Activated T-helper 2 cell treated with anti-CD3 and anti-CD28 coated beads, Interferon-gamma antibody, Interleukin-2, Interleukin-4, amounts not matched to agents 10 μg/mL and 5 μg/mL and 100 μg/mL, durations not matched to agents 14 hours and 24 hours and 36 hours (primary cell): ENCODE measurements at regions of chr17 and their contacts with region 1.

Region 1: GRCh38 chr17:67717624-67718329 is at the start of gene NOL11:
- DNase-seq: peak; percentile 99
- H3K4me3 Mint-ChIP-seq: peak within 1 kb of the TSS; percentile 100
- H3K27ac Mint-ChIP-seq: peak within 1 kb of the TSS; percentile 100
- H3K4me1 Mint-ChIP-seq: peaks cover 13% of the 10 kb centered on the region
- H3K27me3 Mint-ChIP-seq: no peaks in the 10 kb centered on the region
- total RNA-seq, gene NOL11: 81.5 and 96.2 TPM in 2 replicates

Region 2: GRCh38 chr17:67245073-67245755 is 472.6 kb before region 1 on chr17 and contains the start of gene HELZ:
- intact Hi-C with region 1: loop called (anchors 1 kb)
- DNase-seq: peak; percentile 72
- H3K4me3 Mint-ChIP-seq: peak within 1 kb of the TSS; percentile 86
- H3K27ac Mint-ChIP-seq: peak within 1 kb of the TSS; percentile 75
- H3K4me1 Mint-ChIP-seq: peaks cover 40% of the 10 kb centered on the region
- H3K27me3 Mint-ChIP-seq: peaks cover 3% of the 10 kb centered on the region
- total RNA-seq, gene HELZ: 67.1 and 71.7 TPM in 2 replicates

Region 3: DNA sequence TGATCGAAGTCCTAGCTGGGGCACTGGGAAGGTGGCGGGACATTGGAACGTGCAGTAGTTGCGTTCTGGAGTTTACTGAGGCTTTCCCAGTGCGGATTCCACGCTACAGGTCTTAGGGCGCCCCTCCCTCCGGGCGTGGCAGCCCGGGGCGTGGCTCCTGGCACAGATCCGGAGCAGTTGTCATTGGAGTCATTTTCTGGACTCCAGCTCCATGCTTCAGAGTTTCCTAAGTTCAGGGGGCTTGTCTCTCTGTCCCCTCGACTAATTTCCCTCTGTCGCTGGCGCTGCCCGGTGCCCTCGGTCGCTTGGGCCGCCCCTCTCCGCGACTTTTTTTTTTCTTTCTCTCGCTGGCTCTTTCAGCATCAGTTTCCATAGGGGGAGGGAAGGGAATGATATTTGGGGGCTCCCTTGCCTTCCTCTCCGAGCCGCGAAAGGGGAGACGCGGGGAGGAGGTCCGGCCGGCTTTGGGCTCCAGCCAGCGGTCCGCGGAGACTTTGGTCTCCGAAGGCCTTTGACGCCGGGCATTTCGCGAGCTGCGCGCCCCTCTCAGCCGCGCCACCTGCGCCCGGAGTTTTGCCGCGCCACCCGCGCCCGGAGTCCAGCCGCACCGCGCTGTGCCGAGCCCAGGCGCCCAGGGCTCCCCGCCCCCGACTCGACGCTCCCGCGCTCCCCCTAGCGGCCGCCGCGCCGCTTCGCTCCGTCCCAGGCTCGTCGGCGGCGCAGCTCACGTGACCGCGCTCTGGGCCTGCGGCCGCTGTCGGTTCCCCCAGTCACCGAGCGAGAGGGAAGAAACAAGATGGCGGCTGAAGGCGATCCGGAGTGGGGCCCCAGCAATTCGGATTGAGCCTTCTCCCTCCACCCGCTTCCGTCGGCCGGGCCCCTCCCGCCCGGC is 107.2 kb after region 1 on chr17 and contains the start of gene BPTF:
- intact Hi-C with region 1: loop called (anchors 1 kb)
- DNase-seq: peak; percentile 89
- H3K4me3 Mint-ChIP-seq: peak within 1 kb of the TSS; percentile 98
- H3K27ac Mint-ChIP-seq: peak within 1 kb of the TSS; percentile 99
- H3K4me1 Mint-ChIP-seq: peaks cover 17% of the 10 kb centered on the region
- H3K27me3 Mint-ChIP-seq: peaks cover 6% of the 10 kb centered on the region
- total RNA-seq, gene BPTF: 90.8 and 91.2 TPM in 2 replicates